ENCODE measurements at regions of chr6 and their contacts with region 1.

Region 1: DNA sequence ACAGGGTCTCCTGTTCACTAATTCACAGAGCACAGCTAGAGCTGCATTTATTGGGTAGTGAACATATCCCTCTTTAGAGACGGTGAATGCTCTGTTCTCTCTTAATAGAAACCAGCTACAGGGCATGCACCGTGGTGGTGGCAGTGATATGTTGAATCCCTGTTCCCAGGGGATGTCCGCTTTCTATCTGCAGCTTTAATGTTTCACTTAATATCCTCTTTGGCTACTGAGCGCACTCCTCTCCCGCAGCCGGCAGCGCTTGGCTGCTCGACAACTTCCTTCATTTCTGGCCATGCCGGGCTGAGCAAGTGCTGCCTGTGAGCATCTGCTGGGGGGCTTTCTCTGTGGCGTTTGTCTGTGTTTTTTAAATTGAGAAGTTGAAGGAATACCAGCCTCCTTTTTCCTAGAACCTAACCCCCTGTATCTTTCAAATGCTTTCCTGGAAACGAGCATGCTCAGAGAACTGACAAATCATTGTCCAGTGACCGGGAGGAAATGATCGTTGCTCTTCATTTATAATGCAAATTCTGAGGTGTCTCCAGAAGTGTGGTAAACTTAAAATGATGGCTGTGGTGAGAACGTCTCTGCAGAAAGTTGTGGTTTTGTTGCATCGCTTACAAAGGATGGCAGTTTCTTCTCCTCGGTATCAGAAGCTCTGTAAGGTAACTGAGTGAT is 297.9 kb downstream of the UTRN start:
- DNase-seq: peak; percentile 81
- ATAC-seq: peak; percentile 49

Region 2: DNA sequence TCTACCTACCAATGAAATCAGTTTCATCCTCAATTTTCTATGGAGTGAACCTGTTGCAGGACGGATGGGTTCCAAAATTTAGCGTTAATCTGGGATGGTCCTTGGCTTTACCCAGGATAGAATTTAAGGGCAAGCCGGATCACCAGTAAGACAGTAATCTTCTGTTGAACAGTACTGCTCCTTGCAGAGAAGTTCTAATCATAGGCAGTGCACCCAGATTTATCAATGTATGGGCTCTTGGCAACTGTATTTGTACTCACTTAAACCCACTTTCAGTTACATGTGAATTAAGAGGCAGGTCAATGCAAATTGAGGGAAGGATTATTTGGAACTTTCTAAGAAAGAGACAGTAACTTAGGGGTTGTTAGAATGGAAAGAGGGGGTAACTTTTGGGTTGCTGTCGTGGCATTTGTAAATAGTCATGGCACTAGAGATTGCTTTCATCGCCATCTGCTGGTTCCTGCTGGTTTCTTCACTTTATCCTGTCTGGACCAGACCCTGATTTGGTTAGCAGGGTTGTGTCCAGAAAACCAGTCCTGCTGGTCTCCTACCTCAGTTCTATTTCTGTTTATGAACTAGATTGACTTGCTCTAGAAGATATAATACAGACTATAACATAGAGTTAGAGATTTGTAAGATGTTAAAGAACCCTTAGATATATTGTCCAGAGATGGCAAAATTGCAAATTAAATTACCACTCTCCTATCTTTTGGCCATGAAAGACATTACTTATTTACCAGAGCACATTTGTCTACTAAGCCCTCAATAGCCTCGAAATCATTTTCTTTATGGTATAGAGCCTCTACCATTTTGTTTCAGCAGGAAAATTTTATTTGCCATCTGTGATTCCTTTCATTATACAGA is 348.3 kb after region 1 on chr6:
- intact Hi-C with region 1: loop called (anchors 5 kb)
- DNase-seq: no peak
- ATAC-seq: no peak

Region 3: DNA sequence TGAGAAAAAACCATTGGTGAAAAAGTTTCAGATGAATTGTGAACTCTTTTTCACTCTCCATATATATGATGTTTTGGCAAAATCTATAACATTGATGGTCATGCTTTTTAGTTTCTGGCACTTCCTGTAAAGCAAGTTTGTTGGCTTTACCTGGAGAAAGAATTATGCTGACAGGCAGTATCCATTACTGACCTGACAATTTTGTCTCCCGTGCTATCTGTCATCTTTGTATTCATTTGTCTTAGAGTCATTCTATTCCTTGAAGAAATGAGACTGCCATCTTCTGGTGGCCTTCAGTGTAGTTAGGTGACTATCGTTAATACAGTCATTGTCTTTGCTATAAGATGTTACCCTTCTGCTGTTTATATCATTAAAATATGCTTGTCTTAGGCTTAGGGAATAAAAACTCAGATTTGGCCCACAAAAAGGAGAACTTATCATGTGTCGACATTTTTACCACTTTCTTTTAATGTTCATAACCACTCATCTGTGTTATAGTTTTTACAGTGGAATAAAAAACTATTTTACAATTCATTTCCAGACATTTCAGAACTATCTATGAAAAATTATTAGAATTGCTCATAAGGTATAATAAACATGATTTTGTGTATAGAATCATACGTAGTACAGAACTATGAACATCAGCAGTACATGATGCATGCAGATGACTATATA is 445.2 kb after region 1 on chr6:
- intact Hi-C with region 1: loop called (anchors 10 kb)
- DNase-seq: no peak
- ATAC-seq: peak; percentile 46

Region 4: GRCh38 chr6:145214570-145214969 is 631.5 kb after region 1 on chr6:
- intact Hi-C with region 1: loop called (anchors 2 kb)
- DNase-seq: no peak
- ATAC-seq: no peak

Region 5: DNA sequence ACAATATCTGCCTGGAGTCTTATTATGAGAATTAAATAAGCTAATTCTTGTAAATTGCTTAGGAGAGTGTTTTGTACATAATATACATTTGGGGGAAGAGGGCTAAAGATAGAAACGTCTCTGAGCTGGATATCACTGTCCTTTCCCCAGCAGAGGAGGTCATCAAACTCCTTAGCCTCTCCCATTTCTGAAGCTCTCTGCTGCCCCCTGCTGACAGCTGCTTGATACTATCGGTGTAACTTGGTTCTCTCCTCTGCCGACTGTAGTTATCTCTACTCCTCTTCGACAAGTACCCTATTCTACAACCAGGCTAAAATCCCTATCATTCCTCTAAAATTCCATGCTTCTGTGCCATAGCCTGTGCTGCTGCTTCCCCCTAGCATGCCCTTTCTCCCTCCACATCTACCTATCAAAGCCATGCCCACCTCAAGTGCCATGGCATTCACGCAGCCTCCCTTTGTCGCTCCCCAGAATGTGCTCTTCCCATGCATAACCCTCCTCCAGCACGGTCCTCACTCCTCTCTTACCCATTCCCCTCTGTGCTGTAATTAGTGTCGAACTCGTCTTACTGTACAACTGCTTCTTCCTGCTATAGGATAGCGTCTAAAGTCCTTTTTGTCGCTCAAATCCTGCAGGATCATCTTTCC is 1051.0 kb after region 1 on chr6:
- intact Hi-C with region 1: loop called (anchors 10 kb)
- DNase-seq: peak; percentile 82
- ATAC-seq: peak; percentile 85